ENCODE measurements at regions of chr3 and their contacts with region 1.

Region 1: GRCh38 chr3:185983495-185984141 is 45.8 kb upstream of the TRA2B start:
- DNase-seq: peak; percentile 75
- H3K4me3 ChIP-seq: no peak overlapping the region
- H3K27ac ChIP-seq: no peak overlapping the region
- H3K4me1 ChIP-seq: peaks cover 0 to 5% (median 2%) of the 10 kb centered on the region in 4 donors
- H3K27me3 ChIP-seq: peaks cover 7% of the 10 kb centered on the region
- CTCF ChIP-seq: peak; percentile 89 to 94 (median 92)
- EP300 ChIP-seq: no peak
- POLR2A ChIP-seq: no peak

Region 2: DNA sequence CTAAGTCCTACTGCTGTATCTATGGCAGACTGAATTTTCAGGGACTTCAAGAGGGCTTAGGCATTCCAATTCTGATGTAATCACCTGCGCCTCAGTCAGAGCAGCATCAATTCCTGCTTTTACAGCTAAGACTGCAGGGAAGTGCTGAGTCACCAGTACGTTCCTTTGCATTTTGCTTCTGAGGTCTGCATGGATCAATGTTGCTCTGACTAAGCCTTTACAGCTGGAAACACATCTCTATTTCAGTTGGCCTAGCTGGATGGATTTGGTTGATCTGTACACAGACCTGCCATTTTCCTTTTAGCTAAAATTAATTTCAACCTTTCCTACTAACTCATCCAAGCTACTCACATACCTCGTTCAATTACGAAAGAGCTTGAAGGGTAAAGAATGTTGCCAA is 74.0 kb after region 1 on chr3:
- in situ Hi-C with region 1: no loop called
- intact Hi-C with region 1: no loop called
- DNase-seq: no peak
- H3K4me3 ChIP-seq: no peak overlapping the region
- H3K27ac ChIP-seq: no peak overlapping the region
- H3K4me1 ChIP-seq: peaks cover 0 to 16% (median 9%) of the 10 kb centered on the region in 4 donors
- H3K27me3 ChIP-seq: no peaks in the 10 kb centered on the region
- CTCF ChIP-seq: no peak
- EP300 ChIP-seq: no peak
- POLR2A ChIP-seq: no peak

Region 3: DNA sequence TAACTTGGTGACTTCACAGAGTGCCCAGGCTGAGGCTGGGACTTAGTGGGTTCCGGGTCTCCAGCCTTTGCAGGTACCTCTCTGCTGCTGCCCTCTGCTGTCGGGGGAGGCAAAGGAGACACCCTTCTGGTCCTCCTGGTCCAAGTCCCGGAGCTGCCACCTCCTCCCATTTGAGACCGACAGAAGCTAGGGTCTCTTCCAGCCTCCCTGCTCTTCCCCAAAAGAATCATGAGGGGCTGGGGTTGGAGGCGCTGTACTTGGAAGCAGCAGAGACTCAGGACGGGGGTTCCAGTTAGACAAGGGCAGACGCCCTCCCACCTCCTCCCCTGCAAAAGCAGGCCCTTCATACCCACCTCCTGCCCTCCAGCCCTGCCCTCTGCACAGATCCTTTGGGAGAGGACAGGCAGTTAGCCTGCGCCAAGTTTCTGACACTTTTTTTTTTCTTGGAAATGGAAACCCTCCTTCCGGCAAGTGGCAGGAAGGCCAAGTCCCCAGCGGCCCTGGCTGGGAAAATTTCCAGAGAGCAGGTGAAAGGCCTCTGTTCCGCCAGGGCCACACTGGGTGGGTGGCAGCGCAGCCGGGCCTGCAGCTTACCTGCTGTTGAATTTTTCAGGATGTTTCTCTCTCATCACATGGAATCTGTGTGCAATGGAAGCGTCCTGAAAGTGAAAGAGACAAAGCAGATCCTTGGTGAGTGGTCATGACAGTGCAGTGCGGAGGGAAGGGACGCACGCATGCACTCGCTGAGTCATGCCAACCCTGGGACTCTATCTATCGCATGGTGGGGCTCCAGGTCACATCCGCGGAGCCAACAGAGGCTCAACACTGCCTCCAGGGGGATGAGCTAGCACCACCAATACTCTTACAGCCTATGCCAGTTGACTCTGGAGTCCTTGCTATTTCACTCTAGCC is 258.5 kb after region 1 on chr3:
- in situ Hi-C with region 1: loop called in 2 of 4 experiments (anchors 10 to 25 kb)
- intact Hi-C with region 1: loop called (anchors 1 kb)
- DNase-seq: peak; percentile 70
- H3K4me3 ChIP-seq: peak overlapping the region in 1 of 4 donors; percentile 30
- H3K27ac ChIP-seq: peak overlapping the region in 1 of 4 donors; percentile 8
- H3K4me1 ChIP-seq: peaks cover 0 to 10% (median 0%) of the 10 kb centered on the region in 4 donors
- H3K27me3 ChIP-seq: no peaks in the 10 kb centered on the region
- CTCF ChIP-seq: peak; percentile 19 to 41 (median 33)
- EP300 ChIP-seq: no peak
- POLR2A ChIP-seq: no peak

Region 4: DNA sequence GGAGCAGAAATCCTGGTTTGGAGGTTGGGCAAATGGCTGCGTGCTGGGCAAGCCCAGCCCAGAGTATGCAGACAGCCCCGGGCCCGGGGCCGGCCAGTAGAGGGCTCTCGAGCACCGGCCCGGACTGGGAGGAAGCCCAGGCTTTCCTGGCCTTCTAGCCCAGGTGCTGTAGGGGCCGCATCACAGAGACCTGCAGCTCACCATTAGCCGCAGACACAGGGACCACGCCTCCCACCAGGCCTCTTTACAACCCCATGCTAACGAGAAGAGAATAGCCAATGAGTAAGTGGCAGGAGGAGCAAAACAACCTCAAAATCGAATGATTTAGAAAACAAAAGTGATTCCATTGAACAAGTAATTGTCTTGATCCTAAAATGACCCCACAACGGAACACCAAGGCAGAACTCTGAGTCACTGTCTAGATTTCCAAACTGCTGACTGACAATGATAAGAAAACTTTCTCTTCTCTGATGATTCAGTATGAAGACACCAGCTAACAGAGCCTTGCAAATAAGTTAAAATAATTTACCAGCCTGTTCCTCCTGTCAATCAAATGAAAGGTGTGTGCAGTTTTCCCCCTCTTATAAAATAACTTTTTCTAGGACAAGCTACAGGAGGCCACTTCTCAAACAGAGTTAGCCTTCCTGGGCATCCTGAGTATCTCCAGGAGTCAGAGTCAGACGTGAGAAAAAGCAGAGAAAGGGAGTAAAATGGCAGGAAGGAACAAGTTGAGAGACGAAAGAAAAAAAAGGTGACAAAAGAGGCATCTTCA is 276.2 kb after region 1 on chr3:
- in situ Hi-C with region 1: loop called in 2 of 4 experiments (anchors 10 to 25 kb)
- intact Hi-C with region 1: no loop called
- DNase-seq: peak; percentile 77
- H3K4me3 ChIP-seq: no peak overlapping the region
- H3K27ac ChIP-seq: no peak overlapping the region
- H3K4me1 ChIP-seq: peaks cover 0 to 6% (median 0%) of the 10 kb centered on the region in 4 donors
- H3K27me3 ChIP-seq: no peaks in the 10 kb centered on the region
- CTCF ChIP-seq: peak; percentile 74 to 90 (median 81)
- EP300 ChIP-seq: no peak
- POLR2A ChIP-seq: no peak

Region 5: DNA sequence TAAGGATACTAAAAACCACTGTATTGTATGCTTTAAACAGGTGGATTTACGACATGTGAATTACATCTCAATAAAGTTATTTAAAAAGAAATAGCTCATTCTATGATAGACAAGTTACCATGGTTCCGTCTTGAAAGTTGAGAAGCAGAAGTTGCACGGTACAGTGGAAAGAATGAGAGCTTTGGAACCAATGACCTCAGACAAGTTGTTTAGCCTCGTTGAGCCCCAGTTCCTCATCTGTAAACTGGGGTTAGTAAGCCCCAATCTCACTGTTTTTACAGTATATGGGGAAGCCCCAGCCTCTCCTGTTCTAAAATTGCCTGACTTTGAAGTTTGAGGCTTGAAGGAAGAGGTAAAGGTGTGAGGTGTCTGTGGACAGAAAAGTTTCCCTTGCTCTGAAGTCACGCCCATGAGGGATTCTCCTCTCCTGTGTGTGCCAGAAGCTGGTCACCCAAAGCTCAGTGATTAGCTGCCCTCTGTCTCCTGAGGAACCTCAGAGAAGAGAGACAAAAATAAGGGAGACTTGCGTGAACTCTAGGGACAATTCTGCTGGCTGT is 550.6 kb after region 1 on chr3:
- in situ Hi-C with region 1: loop called (anchors 10 to 25 kb)
- intact Hi-C with region 1: no loop called
- DNase-seq: no peak
- H3K4me3 ChIP-seq: no peak overlapping the region
- H3K27ac ChIP-seq: no peak overlapping the region
- H3K4me1 ChIP-seq: peaks cover 0 to 7% (median 0%) of the 10 kb centered on the region in 4 donors
- H3K27me3 ChIP-seq: no peaks in the 10 kb centered on the region
- CTCF ChIP-seq: no peak
- EP300 ChIP-seq: no peak
- POLR2A ChIP-seq: no peak

Measured in transverse colon (tissue), 4 donors.